ENCODE measurements at regions of chr16 and their contacts with region 1.

Region 1: GRCh38 chr16:31179747-31180459 is at the start of gene FUS:
- DNase-seq: peak; percentile 86 to 98 (median 94)
- ATAC-seq: peak; percentile 69
- H3K4me3 ChIP-seq: peak within 1 kb of the TSS; percentile 87
- H3K4me3 Mint-ChIP-seq: peak within 1 kb of the TSS; percentile 97
- H3K27ac ChIP-seq: peak within 1 kb of the TSS; percentile 87 to 97
- H3K27ac Mint-ChIP-seq: peak within 1 kb of the TSS; percentile 95
- H3K4me1 ChIP-seq: peaks cover 67% of the 10 kb centered on the region
- H3K4me1 Mint-ChIP-seq: peaks cover 65% of the 10 kb centered on the region
- H3K27me3 ChIP-seq: no peaks in the 10 kb centered on the region
- H3K27me3 Mint-ChIP-seq: no peaks in the 10 kb centered on the region
- CTCF ChIP-seq: no peak
- total RNA-seq, gene FUS: 699 to 733 TPM

Region 2: GRCh38 chr16:31032736-31033708 is 146.9 kb before region 1 on chr16 and contains the start of gene STX4:
- CTCF ChIA-PET with region 1: no interaction called
- POLR2A ChIA-PET with region 1: interaction called, 6 read pairs
- intact Hi-C with region 1: loop called in 1 of 2 experiments (anchors 5 kb)
- DNase-seq: peak; percentile 93 to 100 (median 96)
- ATAC-seq: peak; percentile 81
- H3K4me3 ChIP-seq: peak within 1 kb of the TSS; percentile 95
- H3K4me3 Mint-ChIP-seq: peak within 1 kb of the TSS; percentile 97
- H3K27ac ChIP-seq: peak within 1 kb of the TSS; percentile 93 to 96
- H3K27ac Mint-ChIP-seq: peak within 1 kb of the TSS; percentile 83
- H3K4me1 ChIP-seq: peaks cover 26% of the 10 kb centered on the region
- H3K4me1 Mint-ChIP-seq: peaks cover 27% of the 10 kb centered on the region
- H3K27me3 ChIP-seq: no peaks in the 10 kb centered on the region
- H3K27me3 Mint-ChIP-seq: no peaks in the 10 kb centered on the region
- CTCF ChIP-seq: no peak
- total RNA-seq, gene STX4: 54.1 to 55.2 TPM

Region 3: DNA sequence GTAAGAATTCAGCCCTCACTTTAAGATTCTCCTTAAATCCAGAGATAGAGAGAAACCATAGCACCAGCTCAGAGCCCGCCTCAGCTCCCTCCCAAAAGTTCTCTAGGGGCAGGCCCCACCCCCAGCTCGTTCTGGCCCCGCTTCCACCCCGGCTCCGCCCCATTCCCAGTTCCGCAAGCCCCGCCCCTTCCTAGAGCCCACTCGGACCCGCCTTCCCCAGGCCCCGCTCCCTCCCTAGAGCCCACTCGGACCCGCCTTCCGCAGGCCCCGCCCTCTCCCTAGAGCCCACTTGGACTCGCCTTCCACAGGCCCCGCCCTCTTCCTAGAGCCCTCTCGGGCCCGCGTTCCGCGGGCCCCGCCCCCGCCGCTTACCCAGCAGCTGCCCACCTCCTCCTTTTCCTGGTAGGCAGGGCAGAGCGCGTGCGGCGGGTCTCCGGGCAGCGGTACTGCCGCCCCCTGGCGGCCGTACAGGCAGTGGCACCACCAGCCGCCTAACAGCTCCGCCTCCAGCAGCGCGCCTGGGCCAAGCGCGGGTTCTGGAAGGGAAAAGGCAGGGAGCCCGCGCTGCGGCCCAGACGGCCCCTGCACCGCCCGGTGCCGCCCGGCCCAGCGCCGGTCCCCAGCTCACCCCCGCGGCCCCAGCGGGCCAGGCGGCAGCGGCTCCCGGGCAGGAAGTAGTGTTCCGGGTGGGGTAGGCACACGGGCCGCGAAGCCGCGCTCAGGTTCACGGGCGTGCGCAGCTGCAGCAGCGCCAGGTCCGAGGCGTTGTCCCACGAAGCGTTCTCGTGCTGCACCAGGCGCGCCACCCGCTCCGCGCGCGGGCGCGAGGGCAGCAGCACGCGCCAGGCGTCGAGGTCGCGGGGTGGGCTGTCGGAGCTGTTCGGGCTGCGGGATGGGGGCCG is 37.5 kb before region 1 on chr16:
- CTCF ChIA-PET with region 1: interaction called, 19 read pairs
- POLR2A ChIA-PET with region 1: interaction called, 152 read pairs
- intact Hi-C with region 1: loop called (anchors 1 to 2 kb)
- DNase-seq: peak; percentile 88 to 100 (median 96)
- ATAC-seq: peak; percentile 86
- H3K4me3 ChIP-seq: peak overlapping the region; percentile 41
- H3K4me3 Mint-ChIP-seq: peak overlapping the region; percentile 84
- H3K27ac ChIP-seq: peak overlapping the region; percentile 29 to 76
- H3K27ac Mint-ChIP-seq: peak overlapping the region; percentile 84
- H3K4me1 ChIP-seq: peaks cover 23% of the 10 kb centered on the region
- H3K4me1 Mint-ChIP-seq: peaks cover 13% of the 10 kb centered on the region
- H3K27me3 ChIP-seq: no peaks in the 10 kb centered on the region
- H3K27me3 Mint-ChIP-seq: peaks cover under 1% of the 10 kb centered on the region
- CTCF ChIP-seq: peak; percentile 79

Region 4: GRCh38 chr16:31196324-31197088 is 16.6 kb after region 1 on chr16:
- CTCF ChIA-PET with region 1: interaction called, 5 read pairs
- POLR2A ChIA-PET with region 1: interaction called, 119 read pairs
- intact Hi-C with region 1: loop called (anchors 2 kb)
- DNase-seq: no peak
- ATAC-seq: no peak
- H3K4me3 ChIP-seq: no peak overlapping the region
- H3K4me3 Mint-ChIP-seq: no peak overlapping the region
- H3K27ac ChIP-seq: no peak overlapping the region
- H3K27ac Mint-ChIP-seq: peak overlapping the region; percentile 70
- H3K4me1 ChIP-seq: peaks cover 37% of the 10 kb centered on the region
- H3K4me1 Mint-ChIP-seq: peaks cover 71% of the 10 kb centered on the region
- H3K27me3 ChIP-seq: no peaks in the 10 kb centered on the region
- H3K27me3 Mint-ChIP-seq: no peaks in the 10 kb centered on the region
- CTCF ChIP-seq: no peak

Region 5: DNA sequence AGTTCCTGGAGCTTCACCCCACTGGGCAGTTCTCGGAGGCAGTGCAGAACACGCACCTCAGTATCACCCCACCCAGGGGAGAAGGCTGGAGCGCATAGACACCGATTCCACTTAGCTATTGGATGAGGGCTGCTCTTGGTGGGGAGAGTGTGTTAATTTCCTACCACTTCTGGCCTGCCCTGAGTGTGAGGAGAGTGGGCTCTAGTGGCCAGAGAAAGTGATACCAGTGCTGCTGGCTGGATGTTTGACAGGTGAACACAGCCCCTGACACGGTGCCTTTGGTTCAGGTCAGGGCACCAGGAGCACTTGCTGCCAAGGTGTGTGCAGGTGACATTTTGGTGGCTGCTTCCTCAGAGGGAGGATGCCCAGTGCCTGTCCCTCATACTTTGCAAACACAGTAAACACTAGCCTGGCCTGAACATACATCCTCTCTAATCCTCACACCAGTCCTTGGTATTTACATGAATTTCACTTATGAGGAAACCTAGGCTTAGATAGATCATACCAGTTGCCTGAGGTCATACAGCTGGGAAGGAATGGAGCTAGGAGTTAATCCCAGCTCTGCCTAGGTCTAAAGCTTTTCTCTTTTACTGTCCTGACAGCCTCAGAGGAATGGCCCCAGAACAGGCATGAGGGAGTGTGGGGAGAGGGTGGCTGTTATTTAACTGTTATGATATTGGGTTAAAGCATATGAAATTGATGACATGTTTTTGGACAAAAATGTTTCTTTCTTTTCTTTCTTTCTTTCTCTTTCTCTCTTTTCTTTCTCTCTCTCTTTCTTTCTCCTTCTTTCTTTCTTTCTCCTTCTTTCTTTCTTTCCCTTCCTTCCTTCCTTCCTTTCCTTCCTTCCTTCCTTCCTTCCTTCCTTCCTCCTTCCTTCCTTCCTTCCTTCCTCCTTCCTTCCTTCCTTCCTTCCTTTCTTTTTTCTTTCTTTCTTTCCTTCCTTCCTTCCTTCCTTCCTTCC is 154.1 kb after region 1 on chr16:
- CTCF ChIA-PET with region 1: no interaction called
- POLR2A ChIA-PET with region 1: interaction called, 5 read pairs
- intact Hi-C with region 1: loop called in 1 of 2 experiments (anchors 10 kb)
- DNase-seq: peak in 5 of 14 experiments; percentile 24 to 58 (median 49)
- ATAC-seq: peak; percentile 66
- H3K4me3 ChIP-seq: no peak overlapping the region
- H3K4me3 Mint-ChIP-seq: peak overlapping the region; percentile 2
- H3K27ac ChIP-seq: no peak overlapping the region
- H3K27ac Mint-ChIP-seq: no peak overlapping the region
- H3K4me1 ChIP-seq: peaks cover 16% of the 10 kb centered on the region
- H3K4me1 Mint-ChIP-seq: peaks cover 25% of the 10 kb centered on the region
- H3K27me3 ChIP-seq: peaks cover 0 to 11% of the 10 kb centered on the region in 2 experiments
- H3K27me3 Mint-ChIP-seq: peaks cover 24% of the 10 kb centered on the region
- CTCF ChIP-seq: peak; percentile 32

Region 6: DNA sequence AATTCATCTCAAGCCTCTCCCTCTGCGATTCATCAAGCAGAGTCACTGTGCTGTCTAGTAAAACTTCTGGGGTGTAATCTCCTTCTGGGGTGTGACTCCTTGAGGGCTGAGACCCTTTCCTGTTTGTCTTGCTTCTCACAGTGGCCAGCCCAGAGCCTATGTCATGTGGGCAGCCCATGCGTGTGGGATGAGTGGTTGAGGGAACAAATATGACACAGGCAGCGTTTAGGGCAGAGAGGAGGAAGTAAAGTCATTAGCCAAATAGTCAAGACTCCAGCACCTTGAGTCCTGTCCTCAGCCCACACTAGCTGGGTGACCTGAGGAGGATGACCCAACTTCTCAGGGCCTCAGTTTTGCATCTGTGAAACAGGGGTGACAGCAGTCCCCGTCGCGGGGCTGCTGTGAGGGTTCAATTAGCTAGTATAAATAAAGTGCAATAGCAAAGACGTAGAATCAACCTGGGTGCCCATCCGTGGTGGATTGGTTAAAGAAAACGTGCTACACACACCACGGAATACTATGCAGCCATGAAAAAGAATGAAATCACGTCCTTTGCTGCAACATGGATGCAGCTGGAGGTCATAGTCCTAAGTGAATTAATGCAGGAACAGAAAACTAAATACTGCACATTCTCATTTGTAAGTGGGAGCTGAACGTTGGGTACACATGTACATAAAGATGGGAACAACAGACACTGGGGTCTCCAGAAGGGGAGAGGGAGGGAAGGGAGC is 170.5 kb after region 1 on chr16:
- CTCF ChIA-PET with region 1: no interaction called
- POLR2A ChIA-PET with region 1: no interaction called
- intact Hi-C with region 1: no loop called
- DNase-seq: peak in 2 of 14 experiments; percentile 62 to 73
- ATAC-seq: peak; percentile 26
- H3K4me3 ChIP-seq: no peak overlapping the region
- H3K4me3 Mint-ChIP-seq: no peak overlapping the region
- H3K27ac ChIP-seq: no peak overlapping the region
- H3K27ac Mint-ChIP-seq: peak overlapping the region; percentile 29
- H3K4me1 ChIP-seq: peaks cover 25% of the 10 kb centered on the region
- H3K4me1 Mint-ChIP-seq: peaks cover 11% of the 10 kb centered on the region
- H3K27me3 ChIP-seq: no peaks in the 10 kb centered on the region
- H3K27me3 Mint-ChIP-seq: peaks cover 5% of the 10 kb centered on the region
- CTCF ChIP-seq: no peak

Region 7: DNA sequence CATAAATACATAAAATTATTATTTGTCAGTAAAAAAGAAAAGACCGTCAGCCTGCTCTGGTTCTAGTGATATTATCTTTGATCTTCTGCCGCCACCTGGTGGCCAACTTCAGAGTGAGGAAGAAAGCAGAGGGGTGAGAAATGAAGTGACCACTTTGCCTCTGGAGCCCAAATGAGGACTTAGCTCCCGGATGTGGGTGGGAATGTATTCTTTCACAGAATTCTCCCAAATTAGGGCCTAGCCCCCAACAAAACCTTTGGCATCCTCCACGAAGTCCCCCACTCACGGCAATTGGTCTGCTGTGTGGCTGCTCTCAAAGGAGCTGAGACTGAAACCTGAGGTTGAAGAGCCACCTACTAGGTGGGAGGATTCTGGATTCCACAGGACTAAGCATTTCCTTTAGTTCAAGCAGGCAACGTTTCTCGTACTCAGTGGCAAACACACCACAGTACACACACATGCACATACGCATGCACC is 688.8 kb after region 1 on chr16:
- CTCF ChIA-PET with region 1: no interaction called
- POLR2A ChIA-PET with region 1: interaction called, 10 read pairs
- intact Hi-C with region 1: loop called (anchors 10 kb)
- DNase-seq: peak; percentile 68 to 88 (median 77)
- ATAC-seq: peak; percentile 35
- H3K4me3 ChIP-seq: peak overlapping the region; percentile 42
- H3K4me3 Mint-ChIP-seq: peak overlapping the region; percentile 78
- H3K27ac ChIP-seq: peak overlapping the region; percentile 49 to 92
- H3K27ac Mint-ChIP-seq: peak overlapping the region; percentile 74
- H3K4me1 ChIP-seq: peaks cover 43% of the 10 kb centered on the region
- H3K4me1 Mint-ChIP-seq: peaks cover 39% of the 10 kb centered on the region
- H3K27me3 ChIP-seq: no peaks in the 10 kb centered on the region
- H3K27me3 Mint-ChIP-seq: no peaks in the 10 kb centered on the region
- CTCF ChIP-seq: peak; percentile 94

Measured in CD4-positive, alpha-beta T cell (primary cell).